ENCODE measurements at regions of chr3 and their contacts with region 1.

Region 1: GRCh38 chr3:128680602-128681368 is 30.2 kb upstream of the RPN1 start:
- DNase-seq: peak; percentile 94 to 100 (median 97)
- ATAC-seq: peak; percentile 85
- H3K4me3 ChIP-seq: peak overlapping the region; percentile 70
- H3K4me3 Mint-ChIP-seq: peak overlapping the region; percentile 97
- H3K27ac ChIP-seq: peak overlapping the region; percentile 88 to 96
- H3K27ac Mint-ChIP-seq: peak overlapping the region; percentile 94
- H3K4me1 ChIP-seq: peaks cover 34% of the 10 kb centered on the region
- H3K4me1 Mint-ChIP-seq: peaks cover 40% of the 10 kb centered on the region
- H3K27me3 ChIP-seq: no peaks in the 10 kb centered on the region
- H3K27me3 Mint-ChIP-seq: no peaks in the 10 kb centered on the region
- CTCF ChIP-seq: peak; percentile 92

Region 2: GRCh38 chr3:128650096-128651050 is 30.4 kb before region 1 on chr3 and contains the start of gene RPN1:
- CTCF ChIA-PET with region 1: interaction called, 13 read pairs
- POLR2A ChIA-PET with region 1: interaction called, 41 read pairs
- intact Hi-C with region 1: loop called (anchors 2 kb)
- DNase-seq: peak; percentile 89 to 97 (median 94)
- ATAC-seq: peak; percentile 96
- H3K4me3 ChIP-seq: peak within 1 kb of the TSS; percentile 99
- H3K4me3 Mint-ChIP-seq: peak within 1 kb of the TSS; percentile 95
- H3K27ac ChIP-seq: peak within 1 kb of the TSS; percentile 89 to 93
- H3K27ac Mint-ChIP-seq: peak within 1 kb of the TSS; percentile 90
- H3K4me1 ChIP-seq: peaks cover 29% of the 10 kb centered on the region
- H3K4me1 Mint-ChIP-seq: peaks cover 45% of the 10 kb centered on the region
- H3K27me3 ChIP-seq: no peaks in the 10 kb centered on the region
- H3K27me3 Mint-ChIP-seq: no peaks in the 10 kb centered on the region
- CTCF ChIP-seq: no peak
- total RNA-seq, gene RPN1: 67.7 to 72.6 TPM

Region 3: GRCh38 chr3:128698211-128699064 is 17.7 kb after region 1 on chr3:
- CTCF ChIA-PET with region 1: interaction called, 4 read pairs
- POLR2A ChIA-PET with region 1: interaction called, 15 read pairs
- intact Hi-C with region 1: no loop called
- DNase-seq: peak in 8 of 14 experiments; percentile 5 to 46 (median 26)
- ATAC-seq: peak; percentile 74
- H3K4me3 ChIP-seq: peak overlapping the region; percentile 66
- H3K4me3 Mint-ChIP-seq: peak overlapping the region; percentile 82
- H3K27ac ChIP-seq: no peak overlapping the region
- H3K27ac Mint-ChIP-seq: no peak overlapping the region
- H3K4me1 ChIP-seq: peaks cover 9% of the 10 kb centered on the region
- H3K4me1 Mint-ChIP-seq: peaks cover 5% of the 10 kb centered on the region
- H3K27me3 ChIP-seq: peaks cover 0 to 9% of the 10 kb centered on the region in 2 experiments
- H3K27me3 Mint-ChIP-seq: no peaks in the 10 kb centered on the region
- CTCF ChIP-seq: no peak

Region 4: GRCh38 chr3:128787256-128788240 is 106.8 kb after region 1 on chr3:
- CTCF ChIA-PET with region 1: interaction called, 13 read pairs
- POLR2A ChIA-PET with region 1: interaction called, 62 read pairs
- intact Hi-C with region 1: no loop called
- DNase-seq: peak in 8 of 14 experiments; percentile 8 to 79 (median 40)
- ATAC-seq: peak; percentile 54
- H3K4me3 ChIP-seq: no peak overlapping the region
- H3K4me3 Mint-ChIP-seq: peak overlapping the region; percentile 80
- H3K27ac ChIP-seq: peak overlapping the region; percentile 60 to 64
- H3K27ac Mint-ChIP-seq: peak overlapping the region; percentile 89
- H3K4me1 ChIP-seq: peaks cover 63% of the 10 kb centered on the region
- H3K4me1 Mint-ChIP-seq: peaks cover 94% of the 10 kb centered on the region
- H3K27me3 ChIP-seq: no peaks in the 10 kb centered on the region
- H3K27me3 Mint-ChIP-seq: no peaks in the 10 kb centered on the region
- CTCF ChIP-seq: peak; percentile 24

Region 5: DNA sequence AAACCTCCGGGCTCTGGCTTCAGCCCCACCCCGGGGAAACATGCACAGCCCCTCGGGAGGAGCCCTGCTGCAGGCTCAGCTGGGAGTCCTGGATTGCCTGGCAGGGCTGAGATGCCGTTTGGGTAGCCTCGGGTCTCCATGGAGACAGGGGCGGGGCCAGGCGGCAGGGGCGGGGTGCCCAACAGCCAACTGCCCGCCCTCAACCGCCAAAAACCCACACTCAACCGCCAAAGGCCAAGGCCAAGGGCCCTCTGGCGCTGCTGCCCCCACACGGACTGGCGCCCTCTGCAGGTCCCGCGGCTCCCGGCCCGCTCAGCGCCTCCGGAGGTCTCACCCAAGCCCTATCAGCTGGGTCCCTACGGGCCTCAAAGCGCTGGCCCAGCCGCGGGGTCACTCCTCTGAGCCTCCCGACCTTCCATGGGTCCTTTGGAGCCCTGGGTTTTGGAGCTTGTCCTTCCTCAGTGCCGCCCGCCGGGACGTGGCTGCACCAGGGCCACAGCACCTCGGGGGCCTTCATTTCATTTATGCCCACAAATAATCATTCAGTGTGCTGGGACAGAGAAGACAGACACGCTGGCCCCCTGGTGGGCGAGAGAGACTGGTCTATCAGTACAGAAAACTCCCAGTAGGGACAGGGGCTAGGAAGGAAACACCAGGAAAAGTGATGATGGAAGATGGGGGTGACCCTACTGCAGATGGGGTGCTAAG is 165.1 kb after region 1 on chr3:
- CTCF ChIA-PET with region 1: interaction called, 45 read pairs
- POLR2A ChIA-PET with region 1: interaction called, 37 read pairs
- intact Hi-C with region 1: loop called (anchors 1 to 2 kb)
- DNase-seq: peak; percentile 62 to 88 (median 76)
- ATAC-seq: peak; percentile 81
- H3K4me3 ChIP-seq: peak overlapping the region; percentile 58
- H3K4me3 Mint-ChIP-seq: peak overlapping the region; percentile 72
- H3K27ac ChIP-seq: peak overlapping the region; percentile 7 to 18
- H3K27ac Mint-ChIP-seq: peak overlapping the region; percentile 55
- H3K4me1 ChIP-seq: peaks cover 21% of the 10 kb centered on the region
- H3K4me1 Mint-ChIP-seq: peaks cover 14% of the 10 kb centered on the region
- H3K27me3 ChIP-seq: no peaks in the 10 kb centered on the region
- H3K27me3 Mint-ChIP-seq: no peaks in the 10 kb centered on the region
- CTCF ChIP-seq: peak; percentile 90

Region 6: DNA sequence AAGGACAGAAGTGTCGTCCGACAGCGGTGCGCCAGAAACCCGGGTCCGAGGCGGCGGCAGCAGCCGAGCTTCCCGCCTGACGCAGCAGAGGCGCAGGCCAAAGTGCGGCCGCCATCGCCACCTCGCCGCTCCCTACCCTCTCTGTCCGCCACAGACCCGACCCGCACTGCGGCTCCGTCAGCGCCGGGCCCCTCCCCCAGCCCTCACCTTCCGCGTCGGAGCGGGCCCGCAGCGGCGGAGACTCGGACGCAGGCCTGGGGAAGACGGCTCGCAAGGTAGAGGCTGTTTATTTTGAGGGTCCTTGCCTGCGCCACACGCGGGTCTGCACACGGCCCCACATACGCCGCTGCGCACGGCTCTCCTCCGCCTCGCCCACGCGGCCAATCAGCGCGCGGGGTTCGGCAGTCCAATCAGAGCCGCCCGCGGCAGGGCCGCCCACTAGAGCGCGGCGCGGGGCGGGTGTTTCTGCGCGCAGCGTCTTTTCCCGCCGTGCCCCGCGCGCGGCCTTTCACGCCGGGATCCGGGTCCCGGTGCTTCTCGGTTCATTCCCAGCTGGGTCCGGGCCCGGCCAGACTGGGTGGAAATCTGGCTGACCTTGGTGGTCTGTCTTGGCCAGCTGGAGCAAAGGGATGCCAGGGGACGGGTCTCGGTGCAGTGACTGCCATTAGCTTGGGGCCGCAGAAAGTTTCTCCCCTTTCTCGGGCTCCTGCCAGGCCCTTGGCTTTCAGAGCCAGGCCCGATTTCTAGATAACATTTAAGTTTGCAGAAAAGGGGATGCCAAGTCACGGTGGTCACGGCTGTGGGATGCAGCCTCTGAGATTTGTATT is 503.0 kb after region 1 on chr3 and contains the start of gene CNBP:
- CTCF ChIA-PET with region 1: interaction called, 3 read pairs
- POLR2A ChIA-PET with region 1: interaction called, 10 read pairs
- intact Hi-C with region 1: no loop called
- DNase-seq: peak; percentile 82 to 97 (median 91)
- ATAC-seq: peak; percentile 95
- H3K4me3 ChIP-seq: peak within 1 kb of the TSS; percentile 68
- H3K4me3 Mint-ChIP-seq: peak within 1 kb of the TSS; percentile 100
- H3K27ac ChIP-seq: peak within 1 kb of the TSS; percentile 91 to 95
- H3K27ac Mint-ChIP-seq: peak within 1 kb of the TSS; percentile 100
- H3K4me1 ChIP-seq: peaks cover 37% of the 10 kb centered on the region
- H3K4me1 Mint-ChIP-seq: peaks cover 49% of the 10 kb centered on the region
- H3K27me3 ChIP-seq: no peaks in the 10 kb centered on the region
- H3K27me3 Mint-ChIP-seq: no peaks in the 10 kb centered on the region
- CTCF ChIP-seq: no peak
- total RNA-seq, gene CNBP: 260 to 267 TPM

Measured in CD4-positive, alpha-beta T cell (primary cell).